Activated CD4-positive, alpha-beta memory T cell treated with anti-CD3 and anti-CD28 coated beads for 36 hours (primary cell): ENCODE measurements at regions of chr10 and their contacts with region 1.

Region 1: GRCh38 chr10:102476466-102477141 is 25.3 kb upstream of the C10orf95 start:
- DNase-seq: no peak
- H3K4me3 Mint-ChIP-seq: no peak overlapping the region
- H3K27ac Mint-ChIP-seq: peak overlapping the region; percentile 65
- H3K4me1 Mint-ChIP-seq: peaks cover 21% of the 10 kb centered on the region
- H3K27me3 Mint-ChIP-seq: no peaks in the 10 kb centered on the region

Region 2: GRCh38 chr10:102408728-102409603 is 67.6 kb before region 1 on chr10:
- CTCF ChIA-PET with region 1: interaction called, 15 read pairs
- POLR2A ChIA-PET with region 1: no interaction called
- intact Hi-C with region 1: no loop called
- DNase-seq: peak; percentile 85
- H3K4me3 Mint-ChIP-seq: peak overlapping the region; percentile 74
- H3K27ac Mint-ChIP-seq: peak overlapping the region; percentile 3
- H3K4me1 Mint-ChIP-seq: peaks cover 30% of the 10 kb centered on the region
- H3K27me3 Mint-ChIP-seq: peaks cover 22% of the 10 kb centered on the region

Region 3: DNA sequence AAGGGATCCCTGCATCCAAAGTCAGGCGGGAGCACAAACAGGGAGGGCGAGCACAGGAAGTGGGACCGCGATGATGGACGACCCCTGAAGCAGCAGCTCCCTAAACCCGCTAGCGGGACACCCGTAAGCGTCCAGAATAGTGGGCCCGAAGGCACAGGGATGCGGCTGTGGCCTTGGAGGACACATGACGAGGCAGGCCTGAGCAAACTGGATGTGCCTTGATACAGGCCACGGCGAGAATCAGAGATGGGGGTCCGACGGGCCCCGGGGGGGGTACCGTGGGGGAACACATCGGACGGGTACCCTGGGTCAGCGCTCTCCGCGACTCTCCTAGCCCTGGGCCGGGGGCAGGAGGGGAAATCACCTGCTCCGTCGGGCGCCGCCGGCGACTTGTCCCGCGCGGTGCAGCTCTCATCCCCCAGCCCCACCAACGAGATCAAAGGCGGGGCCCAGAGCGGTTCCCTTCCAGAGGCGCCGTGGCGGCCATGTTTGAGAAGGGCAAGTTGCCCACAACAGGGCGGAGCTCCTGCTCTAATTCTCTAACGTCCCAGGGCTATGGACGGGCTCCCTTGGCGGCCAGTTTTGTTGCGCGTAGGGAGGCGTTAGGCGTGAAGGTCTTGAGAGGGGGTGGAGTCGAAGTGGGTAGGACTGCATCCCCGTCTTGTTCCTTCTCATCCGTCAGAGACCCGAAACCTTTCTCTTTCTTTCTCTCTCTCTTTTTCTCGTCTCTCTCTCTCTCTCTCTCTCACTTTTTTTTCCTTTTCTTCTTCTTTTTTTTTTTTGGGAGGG is 44.2 kb before region 1 on chr10 and contains the start of gene CUEDC2:
- CTCF ChIA-PET with region 1: interaction called, 12 read pairs
- POLR2A ChIA-PET with region 1: no interaction called
- intact Hi-C with region 1: no loop called
- DNase-seq: peak; percentile 99
- H3K4me3 Mint-ChIP-seq: peak within 1 kb of the TSS; percentile 84
- H3K27ac Mint-ChIP-seq: peak within 1 kb of the TSS; percentile 88
- H3K4me1 Mint-ChIP-seq: peaks cover 42% of the 10 kb centered on the region
- H3K27me3 Mint-ChIP-seq: no peaks in the 10 kb centered on the region
- total RNA-seq, gene CUEDC2: 68.6 to 68.9 TPM

Region 4: DNA sequence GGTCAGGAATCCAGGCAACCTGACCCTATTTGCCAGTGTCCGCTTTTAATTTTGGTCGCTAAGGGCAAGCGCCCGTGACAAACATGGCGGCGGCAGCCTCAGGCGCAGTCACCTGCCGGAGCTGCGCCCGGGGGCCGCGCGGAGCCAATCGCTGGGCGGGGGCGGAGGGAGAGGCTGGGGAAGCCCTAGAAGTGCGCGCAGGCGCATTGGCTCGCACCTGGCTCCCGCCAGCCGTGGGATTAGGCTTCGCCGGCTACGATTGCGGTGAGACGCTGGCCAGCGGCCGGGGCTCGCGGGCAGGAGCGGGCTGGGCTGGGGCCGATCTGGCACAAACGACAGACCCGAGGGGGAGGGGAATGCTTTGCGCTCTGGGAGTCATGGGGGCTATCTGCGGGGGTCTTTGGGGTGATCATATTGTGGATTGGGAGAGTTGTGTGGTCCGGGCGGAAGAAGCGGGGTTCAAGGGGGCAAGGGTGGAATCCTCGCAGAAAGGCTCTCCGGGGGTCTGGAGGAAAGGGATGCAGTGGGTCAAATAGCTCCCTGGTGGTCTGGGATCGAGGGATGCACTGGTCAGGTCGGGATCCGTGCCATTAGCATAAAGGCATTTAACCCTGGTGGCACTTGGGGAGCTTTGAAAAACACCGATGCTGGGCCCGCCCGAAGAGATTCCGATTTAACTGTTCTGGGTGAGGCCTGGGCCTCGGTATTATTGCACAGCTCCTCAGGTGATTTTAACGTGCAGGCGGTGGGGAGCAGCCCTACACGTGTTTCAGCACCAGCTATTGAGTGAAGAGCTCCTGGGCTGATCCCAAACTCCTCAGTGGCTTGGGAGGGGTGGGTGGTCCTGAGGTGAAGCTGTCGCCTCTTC is 15.2 kb before region 1 on chr10:
- CTCF ChIA-PET with region 1: interaction called, 26 read pairs
- POLR2A ChIA-PET with region 1: interaction called, 3 read pairs
- intact Hi-C with region 1: no loop called
- DNase-seq: peak; percentile 95
- H3K4me3 Mint-ChIP-seq: peak overlapping the region; percentile 82
- H3K27ac Mint-ChIP-seq: peak overlapping the region; percentile 47
- H3K4me1 Mint-ChIP-seq: peaks cover 23% of the 10 kb centered on the region
- H3K27me3 Mint-ChIP-seq: no peaks in the 10 kb centered on the region